HEK293 (cell line): ENCODE measurements at regions of chr22 and their contacts with region 1.

Region 1: GRCh38 chr22:28741758-28742561 is at the starts of genes CHEK2 and HSCB:
- H3K4me3 ChIP-seq: peak within 1 kb of the TSS; percentile 72
- H3K27ac ChIP-seq: peak within 1 kb of the TSS; percentile 94
- H3K4me1 ChIP-seq: no peaks in the 10 kb centered on the region
- CTCF ChIP-seq: peak; percentile 90

Region 2: GRCh38 chr22:28600546-28601143 is 141.3 kb before region 1 on chr22:
- CTCF ChIA-PET with region 1: interaction called, 10 read pairs
- POLR2A ChIA-PET with region 1: no interaction called
- H3K4me3 ChIP-seq: no peak overlapping the region
- H3K27ac ChIP-seq: no peak overlapping the region
- H3K4me1 ChIP-seq: no peaks in the 10 kb centered on the region
- CTCF ChIP-seq: no peak